Prostate gland (tissue), 2 donors: ENCODE measurements at regions of chr19 and their contacts with region 1.

Region 1: DNA sequence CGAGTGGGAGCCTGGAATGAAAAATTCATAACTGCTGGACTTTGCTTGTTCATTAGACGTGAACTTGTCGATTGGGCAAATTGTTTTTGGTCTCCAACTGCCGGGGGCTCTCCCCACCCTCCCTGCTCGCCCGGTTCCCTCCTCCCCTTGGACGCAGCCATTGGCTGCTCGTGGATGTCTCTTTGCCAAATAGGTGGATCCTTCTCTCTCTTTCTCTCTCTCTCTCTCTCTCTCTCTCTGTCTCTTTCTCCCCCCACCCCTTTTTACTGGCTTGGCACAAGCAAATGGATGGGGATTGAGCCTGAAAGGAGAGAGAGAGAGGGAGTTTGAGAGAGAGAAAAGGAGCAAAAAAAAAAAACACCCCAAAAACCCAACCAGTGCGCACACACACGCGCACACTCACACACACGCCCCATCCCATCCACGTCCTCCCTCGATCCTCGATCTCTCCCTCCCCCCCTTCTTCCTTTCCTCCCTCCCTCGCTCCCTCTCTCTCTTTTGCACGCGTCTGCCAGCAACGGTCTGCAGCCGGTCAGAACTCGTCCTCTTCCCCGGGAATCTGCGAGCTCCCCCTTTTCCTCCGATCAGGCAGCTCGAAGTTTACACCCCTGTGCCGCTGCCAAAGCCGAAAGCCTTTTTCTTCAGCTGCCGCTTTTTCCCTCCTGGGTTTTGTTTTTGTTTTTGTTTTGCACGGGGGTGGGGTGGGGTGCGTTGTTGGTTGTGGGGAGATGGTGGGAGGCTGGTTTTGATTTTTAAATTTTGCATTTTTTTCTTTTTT is 27.8 kb downstream of the NFIX start:
- DNase-seq: peak; percentile 93
- H3K4me3 ChIP-seq: peak overlapping the region; percentile 37 to 51
- H3K27ac ChIP-seq: peak overlapping the region; percentile 96 to 97
- H3K4me1 ChIP-seq: peaks cover 31% of the 10 kb centered on the region
- H3K27me3 ChIP-seq: no peaks in the 10 kb centered on the region
- CTCF ChIP-seq: peak in 2 of 4 experiments; percentile 10 to 54
- POLR2A ChIP-seq: peak; percentile 35

Region 2: GRCh38 chr19:12994701-12995595 is 28.1 kb before region 1 on chr19 and contains the start of gene NFIX:
- intact Hi-C with region 1: loop called (anchors 1 kb)
- DNase-seq: no peak
- H3K4me3 ChIP-seq: peak within 1 kb of the TSS; percentile 78 to 87
- H3K27ac ChIP-seq: peak within 1 kb of the TSS; percentile 96 to 97
- H3K4me1 ChIP-seq: peaks cover 16% of the 10 kb centered on the region
- H3K27me3 ChIP-seq: no peaks in the 10 kb centered on the region
- CTCF ChIP-seq: no peak
- POLR2A ChIP-seq: no peak
- total RNA-seq, gene NFIX: 185 to 286 TPM

Region 3: GRCh38 chr19:13051267-13052165 is 28.5 kb after region 1 on chr19:
- intact Hi-C with region 1: loop called (anchors 5 kb)
- DNase-seq: peak; percentile 75
- H3K4me3 ChIP-seq: peak overlapping the region in 1 of 2 donors; percentile 9
- H3K27ac ChIP-seq: peak overlapping the region; percentile 95 to 96
- H3K4me1 ChIP-seq: peaks cover 69% of the 10 kb centered on the region
- H3K27me3 ChIP-seq: no peaks in the 10 kb centered on the region
- CTCF ChIP-seq: peak in 1 of 4 experiments; percentile 12
- POLR2A ChIP-seq: peak; percentile 17

Region 4: DNA sequence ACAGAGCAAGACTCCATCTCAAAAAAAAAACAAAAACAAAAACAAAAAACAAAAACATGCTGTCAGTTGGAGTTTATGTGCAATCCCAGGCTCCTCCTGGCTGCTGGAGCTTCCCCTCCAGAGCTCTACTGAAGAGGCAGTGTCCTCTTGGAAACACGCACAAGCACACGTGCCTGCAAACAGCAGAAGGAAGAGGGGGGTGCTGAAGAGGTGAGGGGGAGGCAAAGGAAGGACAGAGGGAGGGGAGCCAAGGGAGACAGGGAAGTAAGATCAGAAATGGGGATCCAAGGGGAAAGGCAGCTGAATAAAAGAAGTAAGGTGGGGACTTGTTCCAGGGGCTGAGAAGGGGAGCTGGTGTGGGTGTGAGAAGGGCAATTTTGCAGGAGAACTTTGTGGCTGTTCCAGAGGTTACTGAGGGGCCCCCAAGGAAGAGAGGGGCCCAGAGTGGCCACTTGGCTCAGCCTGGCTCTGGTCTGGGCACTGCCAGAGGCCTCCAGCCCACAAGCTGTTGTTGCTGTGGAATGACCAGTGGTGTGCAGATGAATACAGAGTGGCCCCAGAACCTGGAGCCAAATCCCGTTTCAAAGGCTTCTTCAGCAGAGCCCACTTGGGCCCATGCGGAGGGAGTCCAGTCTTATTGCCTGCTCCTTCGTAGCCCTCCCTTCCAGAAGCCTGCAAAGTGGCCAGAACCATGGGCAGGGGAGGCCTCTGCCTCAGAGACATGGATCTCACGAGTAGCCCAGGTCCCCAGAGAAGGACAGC is 45.2 kb after region 1 on chr19:
- intact Hi-C with region 1: no loop called
- DNase-seq: no peak
- H3K4me3 ChIP-seq: no peak overlapping the region
- H3K27ac ChIP-seq: peak overlapping the region; percentile 44 to 56
- H3K4me1 ChIP-seq: peaks cover 27% of the 10 kb centered on the region
- H3K27me3 ChIP-seq: no peaks in the 10 kb centered on the region
- CTCF ChIP-seq: no peak
- POLR2A ChIP-seq: no peak

Region 5: GRCh38 chr19:13152974-13153629 is 130.1 kb after region 1 on chr19:
- intact Hi-C with region 1: no loop called
- DNase-seq: peak; percentile 95
- H3K4me3 ChIP-seq: peak overlapping the region; percentile 83 to 89
- H3K27ac ChIP-seq: peak overlapping the region; percentile 98 to 100
- H3K4me1 ChIP-seq: peaks cover 6% of the 10 kb centered on the region
- H3K27me3 ChIP-seq: no peaks in the 10 kb centered on the region
- CTCF ChIP-seq: peak in 1 of 4 experiments; percentile 9
- POLR2A ChIP-seq: peak; percentile 100